ENCODE measurements at regions of chr1 and their contacts with region 1.

Region 1: DNA sequence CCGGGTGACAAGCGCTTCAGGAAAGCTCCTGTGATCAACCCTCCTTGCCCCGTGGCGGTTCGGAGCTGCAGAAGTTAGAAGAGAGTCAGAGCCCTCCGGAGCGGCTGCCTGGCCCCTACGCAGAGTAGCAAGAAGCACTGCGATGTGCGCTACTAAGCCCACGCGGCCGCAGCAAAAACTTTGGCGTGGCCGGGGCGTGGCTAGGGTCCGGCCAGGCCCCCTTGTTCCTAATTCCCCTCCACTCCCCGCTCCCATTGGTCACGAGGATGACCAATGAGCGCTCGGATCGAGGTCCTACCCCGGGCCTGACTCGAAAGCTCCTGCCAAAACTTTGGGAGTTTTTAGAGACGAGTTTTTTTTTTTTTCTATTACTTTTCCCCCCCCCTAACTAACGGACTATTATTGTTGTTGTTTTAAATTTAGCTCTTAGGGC is at the start of gene HLX:
- DNase-seq: peak; percentile 75
- ATAC-seq: peak; percentile 80
- H3K4me3 Mint-ChIP-seq: peak within 1 kb of the TSS; percentile 94
- H3K27ac Mint-ChIP-seq: peak within 1 kb of the TSS; percentile 93
- H3K4me1 Mint-ChIP-seq: peaks cover 50% of the 10 kb centered on the region
- H3K27me3 Mint-ChIP-seq: peaks cover 2% of the 10 kb centered on the region
- CTCF ChIP-seq: no peak
- total RNA-seq, gene HLX: 3.2 and 4.6 TPM in 2 replicates

Region 2: GRCh38 chr1:220827445-220828178 is 51.5 kb before region 1 on chr1:
- CTCF ChIA-PET with region 1: no interaction called
- POLR2A ChIA-PET with region 1: no interaction called
- intact Hi-C with region 1: no loop called
- DNase-seq: no peak
- ATAC-seq: no peak
- H3K4me3 Mint-ChIP-seq: no peak overlapping the region
- H3K27ac Mint-ChIP-seq: no peak overlapping the region
- H3K4me1 Mint-ChIP-seq: no peaks in the 10 kb centered on the region
- H3K27me3 Mint-ChIP-seq: peaks cover 12% of the 10 kb centered on the region
- CTCF ChIP-seq: no peak

Region 3: GRCh38 chr1:221045842-221046831 is 167.0 kb after region 1 on chr1:
- CTCF ChIA-PET with region 1: interaction called, 3 read pairs
- POLR2A ChIA-PET with region 1: interaction called, 16 read pairs
- intact Hi-C with region 1: loop called (anchors 1 kb)
- DNase-seq: no peak
- ATAC-seq: peak; percentile 90
- H3K4me3 Mint-ChIP-seq: peak overlapping the region; percentile 77
- H3K27ac Mint-ChIP-seq: peak overlapping the region; percentile 96
- H3K4me1 Mint-ChIP-seq: peaks cover 58% of the 10 kb centered on the region
- H3K27me3 Mint-ChIP-seq: no peaks in the 10 kb centered on the region
- CTCF ChIP-seq: no peak

Region 4: GRCh38 chr1:221157026-221157761 is 278.1 kb after region 1 on chr1:
- CTCF ChIA-PET with region 1: no interaction called
- POLR2A ChIA-PET with region 1: interaction called, 4 read pairs
- intact Hi-C with region 1: loop called (anchors 5 kb)
- DNase-seq: no peak
- ATAC-seq: peak; percentile 93
- H3K4me3 Mint-ChIP-seq: no peak overlapping the region
- H3K27ac Mint-ChIP-seq: peak overlapping the region; percentile 74
- H3K4me1 Mint-ChIP-seq: peaks cover 29% of the 10 kb centered on the region
- H3K27me3 Mint-ChIP-seq: peaks cover under 1% of the 10 kb centered on the region
- CTCF ChIP-seq: no peak

Region 5: GRCh38 chr1:221263831-221264767 is 385.0 kb after region 1 on chr1:
- CTCF ChIA-PET with region 1: interaction called, 7 read pairs
- POLR2A ChIA-PET with region 1: no interaction called
- intact Hi-C with region 1: loop called (anchors 1 kb)
- DNase-seq: no peak
- ATAC-seq: peak; percentile 69
- H3K4me3 Mint-ChIP-seq: no peak overlapping the region
- H3K27ac Mint-ChIP-seq: no peak overlapping the region
- H3K4me1 Mint-ChIP-seq: no peaks in the 10 kb centered on the region
- H3K27me3 Mint-ChIP-seq: peaks cover 19% of the 10 kb centered on the region
- CTCF ChIP-seq: no peak

Measured in activated B cell treated with CpG ODN at 0.5 μM for 24 hours (primary cell).